ENCODE measurements at regions of chr9 and their contacts with region 1.

Region 1: DNA sequence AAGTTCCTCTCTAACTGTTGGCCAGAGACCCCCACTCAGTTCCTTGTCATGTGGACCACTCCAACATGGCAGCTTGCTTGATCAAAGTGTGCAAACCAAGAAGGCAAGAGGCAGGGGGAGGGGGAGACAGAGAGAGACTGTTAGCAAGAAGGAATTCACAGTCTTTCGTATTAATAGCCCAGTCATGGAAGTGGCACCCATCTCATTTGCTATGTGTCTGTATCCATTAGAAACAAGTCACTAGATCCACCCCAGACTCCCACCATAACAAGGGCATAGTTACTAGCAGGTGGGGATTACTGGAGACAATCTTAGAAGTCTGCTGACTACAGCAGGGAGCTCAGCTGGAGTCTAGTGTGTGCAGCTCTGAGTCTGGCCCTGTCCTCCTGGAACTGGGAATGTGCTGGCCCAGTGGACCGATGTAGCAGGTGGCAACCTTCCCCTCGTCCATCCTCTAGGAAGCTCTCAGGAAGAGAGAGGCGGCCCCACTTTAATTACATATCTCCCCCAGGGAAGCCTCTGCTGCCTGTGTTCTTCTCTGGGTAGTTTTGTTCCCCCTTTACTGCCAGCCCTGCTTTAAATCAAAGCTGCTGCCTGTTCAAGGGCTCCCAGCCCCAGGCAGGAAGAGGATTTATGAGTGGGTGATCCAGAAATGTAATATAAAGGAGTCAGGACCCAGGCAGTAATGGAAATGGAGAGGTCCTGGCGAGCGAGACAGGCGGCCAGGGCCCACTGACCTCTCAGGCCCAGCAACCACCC is 47.8 kb upstream of the ALDH1B1 start:
- DNase-seq: no peak
- ATAC-seq: no peak
- H3K4me3 ChIP-seq: no peak overlapping the region
- H3K27ac ChIP-seq: no peak overlapping the region
- H3K4me1 ChIP-seq: no peaks in the 10 kb centered on the region
- H3K27me3 ChIP-seq: no peaks in the 10 kb centered on the region
- CTCF ChIP-seq: no peak

Region 2: GRCh38 chr9:38277601-38278200 is 67.0 kb before region 1 on chr9:
- CTCF ChIA-PET with region 1: no interaction called
- POLR2A ChIA-PET with region 1: no interaction called
- intact Hi-C with region 1: loop called (anchors 2 kb)
- DNase-seq: peak; percentile 9
- ATAC-seq: no peak
- H3K4me3 ChIP-seq: no peak overlapping the region
- H3K27ac ChIP-seq: no peak overlapping the region
- H3K4me1 ChIP-seq: no peaks in the 10 kb centered on the region
- H3K27me3 ChIP-seq: no peaks in the 10 kb centered on the region
- CTCF ChIP-seq: no peak

Region 3: GRCh38 chr9:38318759-38319495 is 25.8 kb before region 1 on chr9:
- CTCF ChIA-PET with region 1: no interaction called
- POLR2A ChIA-PET with region 1: no interaction called
- intact Hi-C with region 1: no loop called
- DNase-seq: no peak
- ATAC-seq: no peak
- H3K4me3 ChIP-seq: no peak overlapping the region
- H3K27ac ChIP-seq: no peak overlapping the region
- H3K4me1 ChIP-seq: no peaks in the 10 kb centered on the region
- H3K27me3 ChIP-seq: 0 out of 2 replicates have a peak, but pooled peaks cover 5% of the 10 kb centered on the region
- CTCF ChIP-seq: no peak